AG04450 (cell line): ENCODE measurements at regions of chr1 and their contacts with region 1.

Region 1: DNA sequence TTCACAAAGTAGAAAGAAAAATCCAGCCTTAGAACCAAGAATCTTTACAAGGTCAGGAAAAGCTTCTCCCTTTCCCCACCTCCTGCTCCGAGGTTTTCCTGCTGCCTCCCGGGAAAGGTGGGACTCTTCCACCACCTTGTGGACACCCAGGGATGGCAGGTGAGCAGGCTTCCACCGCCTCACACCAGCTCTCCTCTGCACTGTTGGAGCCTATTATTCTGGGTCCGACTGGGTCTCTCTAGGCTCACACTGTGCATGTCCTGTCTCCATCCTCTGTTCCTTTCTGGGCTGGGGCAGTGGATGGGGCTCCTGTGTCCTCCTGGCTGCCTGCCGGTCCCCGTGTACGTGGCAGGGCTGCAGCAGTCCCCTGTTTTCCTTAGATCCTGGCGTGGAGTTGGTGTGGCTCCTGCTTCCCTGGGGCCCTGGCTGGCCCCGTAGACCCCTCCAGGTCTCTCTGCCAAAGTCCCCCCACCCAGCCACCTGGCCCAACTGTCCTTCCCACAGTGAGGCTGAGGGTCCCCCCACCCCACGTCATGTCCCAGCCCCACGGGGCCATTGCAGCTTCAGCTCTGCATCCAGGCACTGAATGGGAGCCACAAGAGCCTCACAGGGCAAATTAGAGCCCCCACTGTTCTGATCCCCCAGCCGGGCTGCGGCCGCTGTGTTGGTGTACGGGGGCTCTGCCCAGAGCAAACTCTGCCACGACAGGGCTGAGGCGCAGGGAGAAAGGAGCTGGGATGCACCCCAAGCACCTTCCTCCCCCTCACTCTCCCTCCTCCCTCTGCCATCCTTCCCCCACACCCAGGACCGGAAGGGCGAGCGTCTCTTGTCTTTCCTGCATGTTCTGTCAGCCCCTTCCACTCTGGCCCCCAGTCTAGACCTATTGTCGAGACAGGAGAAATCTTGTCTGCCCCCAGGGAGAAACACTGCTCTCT is 3.3 kb upstream of the SLC45A1 start:
- DNase-seq: peak; percentile 52
- H3K4me3 ChIP-seq: no peak overlapping the region
- H3K27ac ChIP-seq: no peak overlapping the region
- H3K27me3 ChIP-seq: no peaks in the 10 kb centered on the region
- CTCF ChIP-seq: peak; percentile 96

Region 2: GRCh38 chr1:7983086-7983778 is 331.4 kb before region 1 on chr1:
- CTCF ChIA-PET with region 1: interaction called, 53 read pairs
- POLR2A ChIA-PET with region 1: no interaction called
- DNase-seq: no peak
- H3K4me3 ChIP-seq: no peak overlapping the region
- H3K27ac ChIP-seq: no peak overlapping the region
- H3K27me3 ChIP-seq: no peaks in the 10 kb centered on the region
- CTCF ChIP-seq: no peak

Region 3: GRCh38 chr1:8031176-8031785 is 283.3 kb before region 1 on chr1:
- CTCF ChIA-PET with region 1: interaction called, 46 read pairs
- POLR2A ChIA-PET with region 1: interaction called, 6 read pairs
- DNase-seq: no peak
- H3K4me3 ChIP-seq: no peak overlapping the region
- H3K27ac ChIP-seq: no peak overlapping the region
- H3K27me3 ChIP-seq: no peaks in the 10 kb centered on the region
- CTCF ChIP-seq: peak; percentile 69

Region 4: GRCh38 chr1:8302081-8302956 is 12.3 kb before region 1 on chr1:
- CTCF ChIA-PET with region 1: interaction called, 13 read pairs
- POLR2A ChIA-PET with region 1: no interaction called
- DNase-seq: no peak
- H3K4me3 ChIP-seq: no peak overlapping the region
- H3K27ac ChIP-seq: no peak overlapping the region
- H3K27me3 ChIP-seq: no peaks in the 10 kb centered on the region
- CTCF ChIP-seq: no peak